CD14-positive monocyte (primary cell): ENCODE measurements at regions of chr19 and their contacts with region 1.

Region 1: DNA sequence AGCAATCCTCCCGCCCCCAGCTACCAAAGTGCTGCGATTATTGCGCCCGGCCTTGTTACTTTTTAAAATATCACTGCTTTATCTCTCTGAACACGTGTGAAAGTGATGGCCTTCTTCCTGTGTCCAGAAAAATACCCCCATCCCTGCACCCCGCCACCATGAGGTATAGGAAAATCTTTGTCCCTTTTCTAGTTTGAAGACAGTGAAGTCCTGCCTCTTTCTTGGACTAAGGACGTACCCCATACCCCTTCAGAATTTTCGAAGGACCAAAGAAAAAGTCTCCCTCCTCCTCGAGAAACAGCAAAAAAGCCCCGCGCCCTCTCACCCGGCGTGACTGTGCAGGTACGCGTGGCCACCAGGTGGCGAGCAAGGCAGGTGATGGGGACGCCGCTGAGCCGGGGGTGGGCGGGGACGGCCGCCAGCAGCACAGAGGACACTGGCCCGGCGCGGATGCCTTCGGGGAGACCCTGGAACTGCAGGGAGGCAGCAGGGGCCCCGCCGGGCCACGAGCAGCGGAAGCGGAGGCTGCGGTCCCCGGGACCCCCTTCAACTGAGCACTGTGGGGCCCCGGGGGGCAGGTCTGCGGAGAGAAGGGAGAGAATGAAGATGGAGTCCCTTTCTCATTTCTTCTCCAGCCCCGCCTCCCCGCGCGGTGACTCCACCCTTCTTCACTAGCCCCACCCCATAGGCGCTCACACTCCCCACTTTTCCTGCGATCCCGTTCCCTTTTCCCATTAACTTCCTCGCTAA is 3.2 kb downstream of the VSIG10L start:
- DNase-seq: peak; percentile 57 to 68 (median 58)
- H3K4me3 ChIP-seq: peak overlapping the region; percentile 40 to 86 (median 55)
- H3K4me3 Mint-ChIP-seq: peak overlapping the region; percentile 89 to 97
- H3K27ac ChIP-seq: peak overlapping the region in 1 of 2 donors; percentile 57
- H3K27ac Mint-ChIP-seq: peak overlapping the region; percentile 78 to 96 (median 90)
- H3K4me1 ChIP-seq: peaks cover 19 to 23% of the 10 kb centered on the region in 2 donors
- H3K4me1 Mint-ChIP-seq: peaks cover 18% of the 10 kb centered on the region
- H3K27me3 ChIP-seq: peaks cover 0 to 12% of the 10 kb centered on the region in 2 donors
- H3K27me3 Mint-ChIP-seq: peaks cover 22 to 25% (median 23%) of the 10 kb centered on the region in 3 donors
- CTCF ChIP-seq: peak; percentile 96

Region 2: DNA sequence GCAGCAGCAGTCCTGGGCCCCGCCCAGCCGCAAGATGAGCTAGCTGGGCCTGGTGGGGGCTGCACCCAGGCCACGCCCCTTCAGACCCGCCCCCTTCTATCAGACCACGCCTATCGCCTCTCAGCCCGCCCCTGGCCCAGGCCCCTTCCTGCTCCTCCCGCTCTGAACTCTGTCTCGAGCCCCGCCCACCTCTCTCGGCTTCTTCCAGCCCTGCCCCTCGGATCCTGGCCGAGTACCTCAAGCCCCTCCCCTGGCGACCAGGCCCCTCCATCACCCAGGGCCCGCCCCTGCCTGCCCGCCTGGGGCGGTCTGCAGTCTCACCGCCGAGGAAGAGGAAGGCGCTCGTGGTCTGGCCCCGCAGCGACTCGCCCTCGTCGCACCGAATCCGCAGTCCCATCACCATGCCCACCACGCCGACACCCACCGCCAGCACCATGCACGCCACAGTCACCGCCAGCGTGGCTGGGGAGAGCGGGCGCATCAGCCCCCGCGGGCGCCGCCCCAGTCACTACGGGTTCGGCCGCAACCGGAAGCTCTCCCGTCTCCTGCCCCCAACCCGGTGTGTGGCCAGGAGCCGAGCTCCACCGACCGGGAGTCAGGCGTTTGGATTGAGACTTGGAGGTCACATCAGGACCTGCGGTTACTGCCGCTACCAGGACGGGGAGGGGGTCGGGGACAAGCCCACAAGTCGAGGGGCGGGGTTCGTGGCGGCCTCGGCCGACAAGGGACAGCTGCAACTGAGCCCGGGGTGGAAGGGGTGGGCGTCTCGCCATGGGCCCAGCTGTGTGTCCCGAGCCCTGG is 29.0 kb after region 1 on chr19:
- intact Hi-C with region 1: loop called (anchors 1 to 2 kb)
- DNase-seq: peak; percentile 94 to 98 (median 95)
- H3K4me3 ChIP-seq: peak overlapping the region; percentile 89 to 93 (median 91)
- H3K4me3 Mint-ChIP-seq: peak overlapping the region; percentile 96 to 99
- H3K27ac ChIP-seq: peak overlapping the region; percentile 92 to 93
- H3K27ac Mint-ChIP-seq: peak overlapping the region; percentile 93 to 99 (median 97)
- H3K4me1 ChIP-seq: peaks cover 51 to 83% of the 10 kb centered on the region in 2 donors
- H3K4me1 Mint-ChIP-seq: peaks cover 71% of the 10 kb centered on the region
- H3K27me3 ChIP-seq: no peaks in the 10 kb centered on the region
- H3K27me3 Mint-ChIP-seq: peaks cover 0 to 6% (median 0%) of the 10 kb centered on the region in 3 donors
- CTCF ChIP-seq: no peak

Region 3: GRCh38 chr19:51386882-51387520 is 48.3 kb after region 1 on chr19:
- intact Hi-C with region 1: no loop called
- DNase-seq: no peak
- H3K4me3 ChIP-seq: no peak overlapping the region
- H3K4me3 Mint-ChIP-seq: peak overlapping the region in 1 of 2 donors; percentile 37
- H3K27ac ChIP-seq: no peak overlapping the region
- H3K27ac Mint-ChIP-seq: peak overlapping the region in 1 of 7 donors; percentile 62
- H3K4me1 ChIP-seq: peaks cover 11 to 12% of the 10 kb centered on the region in 2 donors
- H3K4me1 Mint-ChIP-seq: peaks cover 14% of the 10 kb centered on the region
- H3K27me3 ChIP-seq: no peaks in the 10 kb centered on the region
- H3K27me3 Mint-ChIP-seq: peaks cover 0 to 3% (median 1%) of the 10 kb centered on the region in 3 donors
- CTCF ChIP-seq: no peak

Region 4: DNA sequence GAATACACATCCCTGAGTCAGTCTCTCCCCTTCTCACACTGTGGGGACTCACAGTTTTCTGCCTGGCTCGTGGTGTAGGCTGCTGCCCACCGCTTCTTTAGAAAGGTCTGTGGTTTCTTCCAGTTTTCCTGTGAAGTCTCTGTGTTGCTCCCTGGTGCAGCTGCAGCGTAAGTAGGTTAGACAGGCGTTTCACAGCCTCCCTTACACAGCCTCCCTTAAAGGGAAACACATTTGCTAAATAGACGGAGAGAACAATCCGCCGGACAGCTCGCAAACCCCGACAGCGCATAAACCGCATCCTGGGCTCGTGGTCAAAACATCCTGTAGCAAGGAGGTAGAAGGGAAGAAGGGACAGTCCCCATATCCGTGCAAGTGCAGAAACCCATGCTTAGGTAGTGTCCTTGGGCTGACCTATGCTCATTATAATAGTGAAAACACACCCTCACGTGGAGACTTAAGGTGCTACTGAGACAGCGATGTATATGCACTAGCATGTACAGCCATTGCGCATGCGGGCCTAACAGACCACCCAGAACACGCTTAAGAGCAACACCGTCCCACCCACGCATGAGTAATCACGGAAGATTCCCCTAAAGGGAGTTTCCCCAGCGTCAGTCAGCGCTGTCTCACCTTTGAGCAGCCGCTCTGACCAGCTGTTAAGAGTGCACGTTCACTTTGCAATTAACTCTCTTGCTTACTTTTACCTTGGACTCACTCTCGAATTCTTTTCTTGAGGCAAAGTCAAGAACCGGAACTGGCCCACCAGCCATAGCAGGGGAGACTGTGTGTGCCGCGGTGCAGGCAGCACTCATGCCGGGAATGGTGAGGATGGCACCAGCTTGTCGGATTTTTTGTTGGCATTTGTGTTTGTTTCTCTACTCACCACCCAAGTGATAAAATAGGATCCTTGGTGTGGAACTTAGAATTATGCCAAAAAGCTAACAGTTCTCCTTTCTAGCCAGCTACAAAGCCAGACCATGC is 103.0 kb after region 1 on chr19:
- intact Hi-C with region 1: loop called (anchors 2 to 5 kb)
- DNase-seq: peak; percentile 51 to 88 (median 54)
- H3K4me3 ChIP-seq: peak overlapping the region in 1 of 3 experiments; percentile 41
- H3K4me3 Mint-ChIP-seq: peak overlapping the region; percentile 20 to 87
- H3K27ac ChIP-seq: no peak overlapping the region
- H3K27ac Mint-ChIP-seq: peak overlapping the region in 4 of 7 donors; percentile 28 to 82 (median 60)
- H3K4me1 ChIP-seq: peaks cover 16 to 26% of the 10 kb centered on the region in 2 donors
- H3K4me1 Mint-ChIP-seq: peaks cover 22% of the 10 kb centered on the region
- H3K27me3 ChIP-seq: peaks cover 20 to 36% of the 10 kb centered on the region in 2 donors
- H3K27me3 Mint-ChIP-seq: peaks cover 34 to 44% (median 35%) of the 10 kb centered on the region in 3 donors
- CTCF ChIP-seq: no peak

Region 5: DNA sequence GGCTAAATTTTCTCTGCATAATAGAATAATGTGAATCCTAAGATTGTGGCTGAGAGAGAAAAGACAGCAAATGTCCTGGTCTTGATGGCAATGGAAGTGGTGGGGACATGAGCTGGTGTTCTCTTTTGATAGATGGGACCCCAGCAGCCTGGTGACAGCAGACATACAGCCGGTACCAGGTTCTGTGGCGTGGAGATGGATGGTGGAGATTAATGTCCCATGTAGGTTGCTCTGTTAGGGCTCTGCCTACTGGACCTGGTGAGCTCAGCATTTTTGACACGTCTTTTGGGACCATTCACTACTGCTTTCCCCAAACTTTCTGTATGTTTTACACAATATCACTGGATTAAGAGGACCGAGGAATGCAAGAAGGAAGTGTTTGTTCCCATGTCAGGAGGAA is 316.0 kb after region 1 on chr19:
- intact Hi-C with region 1: loop called in 1 of 2 experiments (anchors 5 kb)
- DNase-seq: no peak
- H3K4me3 ChIP-seq: no peak overlapping the region
- H3K4me3 Mint-ChIP-seq: no peak overlapping the region
- H3K27ac ChIP-seq: no peak overlapping the region
- H3K27ac Mint-ChIP-seq: peak overlapping the region in 1 of 7 donors; percentile 75
- H3K4me1 ChIP-seq: peaks cover 53 to 59% of the 10 kb centered on the region in 2 donors
- H3K4me1 Mint-ChIP-seq: peaks cover 58% of the 10 kb centered on the region
- H3K27me3 ChIP-seq: no peaks in the 10 kb centered on the region
- H3K27me3 Mint-ChIP-seq: peaks cover 0 to 9% (median 2%) of the 10 kb centered on the region in 3 donors
- CTCF ChIP-seq: no peak